ENCODE measurements at regions of chr10 and their contacts with region 1.

Region 1: GRCh38 chr10:95363303-95363912 is 72.6 kb upstream of the PDLIM1 start:
- DNase-seq: peak; percentile 71
- ATAC-seq: peak; percentile 68
- H3K4me3 Mint-ChIP-seq: no peak overlapping the region
- H3K27ac Mint-ChIP-seq: no peak overlapping the region
- H3K4me1 Mint-ChIP-seq: no peaks in the 10 kb centered on the region
- H3K27me3 Mint-ChIP-seq: peaks cover 10% of the 10 kb centered on the region

Region 2: GRCh38 chr10:95133016-95133752 is 230.2 kb before region 1 on chr10:
- CTCF ChIA-PET with region 1: interaction called, 12 read pairs
- POLR2A ChIA-PET with region 1: no interaction called
- DNase-seq: peak; percentile 84
- ATAC-seq: peak; percentile 76
- H3K4me3 Mint-ChIP-seq: no peak overlapping the region
- H3K27ac Mint-ChIP-seq: no peak overlapping the region
- H3K4me1 Mint-ChIP-seq: no peaks in the 10 kb centered on the region
- H3K27me3 Mint-ChIP-seq: no peaks in the 10 kb centered on the region

Region 3: GRCh38 chr10:95183271-95184230 is 179.9 kb before region 1 on chr10:
- CTCF ChIA-PET with region 1: interaction called, 19 read pairs
- POLR2A ChIA-PET with region 1: no interaction called
- DNase-seq: peak; percentile 77
- ATAC-seq: peak; percentile 98
- H3K4me3 Mint-ChIP-seq: peak overlapping the region; percentile 61
- H3K27ac Mint-ChIP-seq: peak overlapping the region; percentile 22
- H3K4me1 Mint-ChIP-seq: peaks cover 7% of the 10 kb centered on the region
- H3K27me3 Mint-ChIP-seq: peaks cover 22% of the 10 kb centered on the region

Region 4: GRCh38 chr10:95236068-95236903 is 127.1 kb before region 1 on chr10:
- CTCF ChIA-PET with region 1: interaction called, 17 read pairs
- POLR2A ChIA-PET with region 1: no interaction called
- DNase-seq: no peak
- ATAC-seq: peak; percentile 62
- H3K4me3 Mint-ChIP-seq: no peak overlapping the region
- H3K27ac Mint-ChIP-seq: peak overlapping the region; percentile 51
- H3K4me1 Mint-ChIP-seq: peaks cover 23% of the 10 kb centered on the region
- H3K27me3 Mint-ChIP-seq: no peaks in the 10 kb centered on the region

Region 5: GRCh38 chr10:95246579-95247051 is 116.8 kb before region 1 on chr10:
- CTCF ChIA-PET with region 1: interaction called, 265 read pairs
- POLR2A ChIA-PET with region 1: no interaction called
- DNase-seq: peak; percentile 81
- ATAC-seq: peak; percentile 84
- H3K4me3 Mint-ChIP-seq: no peak overlapping the region
- H3K27ac Mint-ChIP-seq: no peak overlapping the region
- H3K4me1 Mint-ChIP-seq: peaks cover 17% of the 10 kb centered on the region
- H3K27me3 Mint-ChIP-seq: no peaks in the 10 kb centered on the region

Region 6: GRCh38 chr10:95273393-95274312 is 89.8 kb before region 1 on chr10:
- CTCF ChIA-PET with region 1: no interaction called
- POLR2A ChIA-PET with region 1: no interaction called
- DNase-seq: no peak
- ATAC-seq: no peak
- H3K4me3 Mint-ChIP-seq: no peak overlapping the region
- H3K27ac Mint-ChIP-seq: no peak overlapping the region
- H3K4me1 Mint-ChIP-seq: no peaks in the 10 kb centered on the region
- H3K27me3 Mint-ChIP-seq: peaks cover 2% of the 10 kb centered on the region

Region 7: DNA sequence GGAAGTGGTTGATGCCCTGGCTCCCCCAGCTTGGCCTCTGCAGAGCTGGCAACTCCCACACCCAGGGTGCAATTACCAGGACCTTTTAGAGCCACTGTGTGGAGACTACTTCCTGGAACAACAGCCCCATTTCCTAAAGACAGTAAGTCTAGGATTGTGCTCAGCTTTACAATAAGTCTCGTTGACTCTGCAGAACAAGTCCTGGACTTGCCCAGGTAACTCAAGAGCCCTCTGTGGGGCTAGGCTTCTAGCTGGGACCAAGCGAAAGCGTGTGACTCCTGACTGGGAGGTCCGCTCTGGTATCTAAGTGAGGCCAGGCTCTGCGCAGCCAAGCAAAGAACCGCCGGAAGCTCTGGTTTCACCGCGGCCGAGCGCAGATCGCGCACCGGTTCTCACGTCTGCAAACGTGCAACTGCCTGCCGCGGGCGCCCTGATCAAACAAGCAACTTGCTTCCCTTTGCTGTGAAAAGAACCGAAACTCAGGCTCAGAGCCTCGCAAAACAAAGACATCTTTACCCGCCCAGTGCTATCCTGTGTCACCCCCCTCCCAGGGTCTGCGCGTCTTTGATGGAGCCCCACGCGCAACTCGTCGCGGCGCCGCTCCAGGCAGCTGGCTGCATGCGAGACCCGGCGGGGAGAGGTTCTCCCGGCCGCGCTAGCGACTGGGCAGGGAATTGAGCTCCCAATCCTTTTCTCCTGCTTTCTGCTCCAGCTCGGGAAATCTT is 68.2 kb before region 1 on chr10:
- CTCF ChIA-PET with region 1: interaction called, 12 read pairs
- POLR2A ChIA-PET with region 1: no interaction called
- DNase-seq: peak; percentile 83
- ATAC-seq: peak; percentile 85
- H3K4me3 Mint-ChIP-seq: peak overlapping the region; percentile 69
- H3K27ac Mint-ChIP-seq: peak overlapping the region; percentile 86
- H3K4me1 Mint-ChIP-seq: peaks cover 29% of the 10 kb centered on the region
- H3K27me3 Mint-ChIP-seq: peaks cover 26% of the 10 kb centered on the region